Activated CD4-positive, alpha-beta memory T cell treated with anti-CD3 and anti-CD28 coated beads for 36 hours (primary cell): ENCODE measurements at regions of chr19 and their contacts with region 1.

Region 1: DNA sequence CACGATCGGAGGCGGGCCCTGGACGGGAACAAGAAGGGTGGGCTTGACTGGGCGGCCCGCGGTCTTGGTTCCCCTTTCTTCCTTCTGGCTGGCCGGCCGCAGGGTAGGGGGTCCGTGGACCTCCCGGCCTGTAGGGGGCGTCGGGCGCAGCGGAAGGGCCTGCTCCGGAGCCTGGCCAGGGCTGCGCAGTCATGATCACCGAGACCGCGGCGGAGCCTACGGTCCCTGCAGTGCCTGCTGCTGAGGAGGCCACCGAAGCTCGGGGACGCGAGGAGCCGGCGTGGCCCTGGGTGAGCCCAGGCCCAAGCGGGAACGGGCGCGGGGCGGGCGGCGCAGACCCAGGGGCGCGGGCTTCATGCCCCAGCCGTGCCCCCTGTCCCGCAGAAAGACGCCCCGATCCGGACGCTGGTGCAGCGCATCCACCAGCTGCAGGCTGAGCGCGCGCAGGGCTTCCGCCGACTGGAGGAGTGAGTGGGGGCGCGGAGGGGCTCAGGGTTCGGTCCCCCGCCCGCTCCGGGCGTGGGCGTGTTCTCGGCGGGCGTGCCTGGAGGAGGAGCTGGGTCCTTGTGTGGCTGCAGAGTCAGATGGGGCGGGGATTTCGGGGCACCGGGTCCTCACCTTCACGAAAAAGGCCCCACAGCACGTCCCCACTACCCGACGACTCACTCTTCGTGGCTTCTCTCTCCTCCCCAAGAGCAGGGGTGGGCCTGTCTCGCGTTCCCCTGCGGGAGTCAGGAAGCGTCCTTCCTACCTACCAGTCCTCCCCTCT is at the start of gene REX1BD:
- DNase-seq: peak; percentile 88
- H3K4me3 Mint-ChIP-seq: peak within 1 kb of the TSS; percentile 82
- H3K27ac Mint-ChIP-seq: peak within 1 kb of the TSS; percentile 81
- H3K4me1 Mint-ChIP-seq: peaks cover 34% of the 10 kb centered on the region
- H3K27me3 Mint-ChIP-seq: no peaks in the 10 kb centered on the region
- total RNA-seq, gene REX1BD: 97.6 to 99.3 TPM

Region 2: GRCh38 chr19:18450931-18451845 is 137.6 kb before region 1 on chr19:
- CTCF ChIA-PET with region 1: interaction called, 13 read pairs
- POLR2A ChIA-PET with region 1: no interaction called
- intact Hi-C with region 1: no loop called
- DNase-seq: peak; percentile 91
- H3K4me3 Mint-ChIP-seq: no peak overlapping the region
- H3K27ac Mint-ChIP-seq: no peak overlapping the region
- H3K4me1 Mint-ChIP-seq: no peaks in the 10 kb centered on the region
- H3K27me3 Mint-ChIP-seq: no peaks in the 10 kb centered on the region

Region 3: GRCh38 chr19:18557474-18558201 is 31.2 kb before region 1 on chr19 and contains the start of gene KXD1:
- CTCF ChIA-PET with region 1: interaction called, 10 read pairs
- POLR2A ChIA-PET with region 1: interaction called, 17 read pairs
- intact Hi-C with region 1: no loop called
- DNase-seq: peak; percentile 99
- H3K4me3 Mint-ChIP-seq: peak within 1 kb of the TSS; percentile 86
- H3K27ac Mint-ChIP-seq: peak within 1 kb of the TSS; percentile 94
- H3K4me1 Mint-ChIP-seq: peaks cover 13% of the 10 kb centered on the region
- H3K27me3 Mint-ChIP-seq: no peaks in the 10 kb centered on the region
- total RNA-seq, gene KXD1: 112 to 114 TPM

Region 4: DNA sequence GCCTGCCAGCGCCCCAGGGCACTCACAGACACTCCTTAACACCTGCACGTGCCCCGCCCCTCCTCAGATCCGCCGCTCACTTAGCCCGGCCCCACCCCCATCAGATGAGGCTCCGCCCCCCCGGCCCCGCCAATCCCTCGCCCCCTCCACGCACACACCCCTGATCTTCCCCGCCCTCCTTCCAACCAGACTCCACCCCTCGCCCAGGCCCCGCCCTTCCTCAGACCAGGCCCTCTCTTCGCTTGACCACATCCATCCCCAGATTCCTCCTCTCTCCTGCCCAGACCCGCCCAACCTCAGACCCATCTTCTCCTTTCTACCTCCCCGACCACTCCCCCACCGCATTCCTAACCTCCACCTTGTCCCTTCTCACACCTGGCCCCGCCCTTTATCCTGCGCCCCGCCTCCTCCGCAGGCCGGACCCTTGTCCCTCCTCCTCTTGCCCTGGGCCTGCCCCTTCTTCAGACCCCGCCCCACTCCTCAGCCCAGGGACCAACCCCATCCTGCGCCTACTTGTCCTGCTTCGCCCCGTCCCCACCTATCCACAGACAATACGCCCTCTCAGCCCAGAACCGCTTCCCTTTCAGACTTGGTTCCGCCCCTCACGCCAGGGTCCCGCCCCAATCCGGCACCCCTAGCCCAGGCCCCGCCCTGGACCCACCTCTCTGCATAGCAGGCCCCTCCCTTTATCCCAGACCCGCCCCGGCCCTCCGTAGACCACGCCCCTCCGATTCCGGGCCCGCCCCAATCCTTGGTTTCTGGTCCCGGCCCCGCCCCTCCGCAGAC is 47.6 kb after region 1 on chr19:
- CTCF ChIA-PET with region 1: no interaction called
- POLR2A ChIA-PET with region 1: no interaction called
- intact Hi-C with region 1: loop called (anchors 5 kb)
- DNase-seq: peak; percentile 99
- H3K4me3 Mint-ChIP-seq: peak overlapping the region; percentile 82
- H3K27ac Mint-ChIP-seq: peak overlapping the region; percentile 74
- H3K4me1 Mint-ChIP-seq: peaks cover 22% of the 10 kb centered on the region
- H3K27me3 Mint-ChIP-seq: no peaks in the 10 kb centered on the region

Region 5: GRCh38 chr19:18831524-18832305 is 242.9 kb after region 1 on chr19 and contains the start of gene UPF1:
- CTCF ChIA-PET with region 1: interaction called, 5 read pairs
- POLR2A ChIA-PET with region 1: interaction called, 5 read pairs
- intact Hi-C with region 1: loop called (anchors 5 kb)
- DNase-seq: peak; percentile 96
- H3K4me3 Mint-ChIP-seq: peak within 1 kb of the TSS; percentile 96
- H3K27ac Mint-ChIP-seq: peak within 1 kb of the TSS; percentile 93
- H3K4me1 Mint-ChIP-seq: peaks cover 31% of the 10 kb centered on the region
- H3K27me3 Mint-ChIP-seq: no peaks in the 10 kb centered on the region
- total RNA-seq, gene UPF1: 71.7 to 77.2 TPM

Region 6: DNA sequence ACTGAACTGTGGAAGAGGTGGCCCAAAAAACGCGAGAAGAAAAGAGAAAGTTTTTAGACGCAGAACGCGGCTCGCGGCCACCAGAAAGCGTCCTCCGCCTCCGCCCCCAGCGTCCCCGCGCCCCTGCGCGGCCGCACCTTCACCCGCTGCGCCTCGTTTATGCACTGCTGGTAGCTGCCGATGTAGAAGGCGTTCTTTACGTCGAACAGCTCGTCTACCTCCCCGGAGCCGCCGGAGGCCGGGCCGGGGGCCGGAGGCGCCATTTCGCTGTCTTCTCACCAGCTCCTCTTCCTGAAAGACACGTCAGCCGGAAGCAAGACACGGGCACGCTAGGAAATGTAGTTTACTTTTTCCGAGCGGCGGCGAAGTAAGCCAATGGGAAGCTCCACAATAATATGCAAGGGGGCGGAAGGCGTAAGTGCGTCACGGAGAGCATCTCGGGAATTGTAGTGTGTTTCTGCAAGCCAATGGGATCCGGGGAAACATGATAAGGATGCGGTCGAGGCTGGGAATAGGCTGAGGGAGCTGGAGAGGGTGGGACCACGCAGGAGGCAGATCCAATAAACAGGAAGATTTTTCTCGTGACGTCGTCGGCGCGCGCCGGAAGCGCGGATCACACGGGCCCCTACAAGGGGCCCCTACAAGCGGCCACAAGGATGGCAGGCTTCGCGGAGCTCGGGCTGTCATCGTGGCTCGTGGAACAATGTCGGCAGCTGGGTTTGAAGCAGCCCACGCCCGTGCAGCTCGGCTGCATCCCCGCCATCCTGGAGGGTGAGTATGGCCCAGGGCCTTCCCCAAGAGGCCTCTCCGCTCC is 330.5 kb after region 1 on chr19 and contains the starts of genes COPE and DDX49:
- CTCF ChIA-PET with region 1: interaction called, 16 read pairs
- POLR2A ChIA-PET with region 1: interaction called, 5 read pairs
- intact Hi-C with region 1: loop called (anchors 5 kb)
- DNase-seq: peak; percentile 99
- H3K4me3 Mint-ChIP-seq: peak within 1 kb of the TSS; percentile 89
- H3K27ac Mint-ChIP-seq: peak within 1 kb of the TSS; percentile 84
- H3K4me1 Mint-ChIP-seq: peaks cover 35% of the 10 kb centered on the region
- H3K27me3 Mint-ChIP-seq: no peaks in the 10 kb centered on the region
- total RNA-seq, gene COPE: 217 to 220 TPM
- total RNA-seq, gene DDX49: 37.7 to 46.3 TPM

Region 7: DNA sequence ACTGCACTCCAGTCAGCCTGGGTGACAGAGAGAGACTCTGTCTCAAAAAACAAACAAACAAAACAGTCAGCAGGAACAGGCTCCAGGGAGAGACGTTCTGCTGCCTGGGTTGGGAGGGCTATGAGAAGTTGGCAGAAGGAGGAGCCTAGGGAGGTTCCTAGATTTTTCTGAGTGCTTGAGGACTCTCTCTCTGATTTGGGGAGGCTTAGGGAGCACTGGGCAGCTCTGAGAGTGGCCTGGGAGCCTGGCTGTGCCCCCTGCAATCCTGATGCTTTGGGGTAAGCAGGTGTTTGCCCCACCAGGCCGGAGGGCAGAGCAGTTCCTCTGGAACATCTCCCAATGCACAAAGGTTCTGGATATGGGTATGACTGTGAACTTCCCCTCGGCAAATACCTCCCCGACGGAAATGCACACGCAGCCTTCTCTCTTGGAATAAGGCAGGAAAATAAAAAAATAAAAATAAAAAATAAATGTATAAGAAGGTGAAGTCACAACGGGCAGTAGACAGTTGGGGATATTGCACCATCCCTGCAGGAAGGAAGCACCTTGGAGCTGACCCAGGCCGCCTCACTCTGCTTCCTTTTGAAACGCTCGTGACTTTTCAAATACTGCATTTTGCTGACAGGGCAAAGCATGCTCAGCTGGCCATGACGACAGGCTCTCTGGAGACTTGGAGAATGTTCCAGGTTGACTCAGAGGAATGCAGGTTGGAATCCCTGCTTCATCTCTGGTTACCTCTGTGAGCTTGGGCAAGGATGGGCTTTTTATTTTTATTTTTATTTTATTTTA is 378.8 kb after region 1 on chr19:
- CTCF ChIA-PET with region 1: no interaction called
- POLR2A ChIA-PET with region 1: no interaction called
- intact Hi-C with region 1: no loop called
- DNase-seq: no peak
- H3K4me3 Mint-ChIP-seq: no peak overlapping the region
- H3K27ac Mint-ChIP-seq: no peak overlapping the region
- H3K4me1 Mint-ChIP-seq: peaks cover 5% of the 10 kb centered on the region
- H3K27me3 Mint-ChIP-seq: peaks cover 6% of the 10 kb centered on the region